ENCODE measurements at regions of chr5 and their contacts with region 1.

Region 1: DNA sequence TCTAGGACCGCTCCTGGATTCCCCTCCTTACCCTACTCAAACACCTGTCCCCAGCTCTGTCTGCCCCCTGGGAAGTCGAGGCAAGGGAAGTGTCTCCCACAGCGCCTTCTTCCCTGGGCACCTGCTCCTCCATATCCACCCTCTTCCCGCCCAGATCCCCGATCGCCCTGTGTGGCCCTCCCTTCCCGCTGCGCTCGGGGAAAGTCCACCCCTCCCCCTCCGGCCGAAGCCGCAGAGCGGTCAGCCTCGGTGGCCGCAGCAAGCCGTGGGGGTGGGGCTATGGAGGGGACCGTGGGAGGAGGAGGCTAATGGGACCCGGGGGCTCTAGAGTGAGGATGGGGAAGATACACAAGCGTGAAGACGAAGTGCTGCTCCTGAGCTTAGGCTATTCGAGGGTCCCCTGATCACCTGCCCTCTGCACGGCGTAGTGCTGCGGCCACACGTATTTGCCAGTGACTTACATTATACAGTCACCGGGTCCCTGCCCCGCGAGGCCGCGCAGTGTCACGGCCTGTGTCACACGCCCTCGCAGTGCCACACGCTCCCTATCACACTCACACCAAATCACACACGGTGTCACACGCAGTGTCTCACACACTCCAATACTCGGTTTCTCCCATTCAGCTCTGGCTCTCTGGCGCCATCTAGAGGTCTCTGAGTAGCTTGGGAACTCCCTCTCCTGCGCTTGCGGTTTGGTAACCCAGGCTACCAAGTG is 658 bp upstream of the PCDH1 start:
- DNase-seq: peak; percentile 90
- H3K4me3 ChIP-seq: peak overlapping the region; percentile 50 to 58 (median 53)
- H3K27ac ChIP-seq: no peak overlapping the region
- H3K4me1 ChIP-seq: peaks cover 26% of the 10 kb centered on the region
- H3K27me3 ChIP-seq: peaks cover 11% of the 10 kb centered on the region
- CTCF ChIP-seq: peak; percentile 98 to 99

Region 2: GRCh38 chr5:140273401-140273877 is 1605.4 kb before region 1 on chr5:
- CTCF ChIA-PET with region 1: no interaction called
- dilution Hi-C with region 1: no loop called
- in situ Hi-C with region 1: no loop called
- intact Hi-C with region 1: no loop called
- DNase-seq: no peak
- H3K4me3 ChIP-seq: no peak overlapping the region
- H3K27ac ChIP-seq: no peak overlapping the region
- H3K4me1 ChIP-seq: no peaks in the 10 kb centered on the region
- H3K27me3 ChIP-seq: no peaks in the 10 kb centered on the region
- CTCF ChIP-seq: no peak

Region 3: GRCh38 chr5:141701360-141702119 is 177.3 kb before region 1 on chr5:
- CTCF ChIA-PET with region 1: interaction called, 3 read pairs
- dilution Hi-C with region 1: no loop called
- in situ Hi-C with region 1: loop called in 1 of 2 experiments (anchors 5 kb)
- intact Hi-C with region 1: loop called (anchors 1 kb)
- DNase-seq: no peak
- H3K4me3 ChIP-seq: no peak overlapping the region
- H3K27ac ChIP-seq: no peak overlapping the region
- H3K4me1 ChIP-seq: peaks cover 9% of the 10 kb centered on the region
- H3K27me3 ChIP-seq: peaks cover 5% of the 10 kb centered on the region
- CTCF ChIP-seq: no peak

Region 4: DNA sequence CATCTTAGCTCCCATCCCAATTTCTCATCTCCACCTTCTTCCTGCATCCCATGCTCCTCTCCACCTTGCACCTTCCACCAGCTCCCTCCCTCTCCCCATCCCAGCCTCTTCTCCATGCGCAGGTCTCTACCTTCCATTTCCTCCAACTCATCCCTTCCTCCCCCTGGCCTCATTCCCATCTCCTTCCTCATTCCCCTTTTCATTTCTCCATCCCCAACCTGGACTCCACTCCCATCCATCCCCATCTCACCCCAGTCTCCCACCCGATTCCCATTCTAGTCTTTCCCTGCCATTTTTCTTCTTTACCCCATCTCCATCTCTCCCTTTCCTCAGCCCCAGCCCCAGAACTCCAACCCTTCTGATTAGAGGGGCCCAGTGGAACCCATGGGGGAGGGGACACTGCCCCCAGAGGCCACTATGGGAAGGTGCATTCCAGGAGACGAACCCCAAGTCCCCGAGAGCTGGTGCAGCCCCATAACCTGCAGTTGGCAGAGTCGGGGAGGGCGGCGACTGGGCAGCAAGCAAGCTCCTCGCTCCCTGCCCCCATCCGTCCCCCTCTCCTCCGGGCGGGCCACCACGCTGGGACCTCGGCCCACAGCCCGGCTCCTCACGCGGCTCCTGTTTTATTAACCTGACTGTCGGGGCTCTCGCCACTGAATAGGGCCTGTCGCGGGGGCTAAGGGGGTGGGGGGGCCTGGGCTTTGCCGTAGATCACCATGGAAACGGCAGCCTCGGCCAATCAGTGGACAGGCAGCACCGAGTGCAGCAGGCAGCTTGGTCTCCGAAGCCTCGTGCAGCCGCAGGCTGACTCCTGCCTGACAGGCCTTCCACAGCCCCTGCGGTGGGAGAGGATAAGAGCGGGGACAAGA is 67.3 kb before region 1 on chr5:
- CTCF ChIA-PET with region 1: no interaction called
- dilution Hi-C with region 1: no loop called
- in situ Hi-C with region 1: no loop called
- intact Hi-C with region 1: loop called (anchors 1 kb)
- DNase-seq: no peak
- H3K4me3 ChIP-seq: no peak overlapping the region
- H3K27ac ChIP-seq: no peak overlapping the region
- H3K4me1 ChIP-seq: no peaks in the 10 kb centered on the region
- H3K27me3 ChIP-seq: no peaks in the 10 kb centered on the region
- CTCF ChIP-seq: peak; percentile 55 to 67

Region 5: DNA sequence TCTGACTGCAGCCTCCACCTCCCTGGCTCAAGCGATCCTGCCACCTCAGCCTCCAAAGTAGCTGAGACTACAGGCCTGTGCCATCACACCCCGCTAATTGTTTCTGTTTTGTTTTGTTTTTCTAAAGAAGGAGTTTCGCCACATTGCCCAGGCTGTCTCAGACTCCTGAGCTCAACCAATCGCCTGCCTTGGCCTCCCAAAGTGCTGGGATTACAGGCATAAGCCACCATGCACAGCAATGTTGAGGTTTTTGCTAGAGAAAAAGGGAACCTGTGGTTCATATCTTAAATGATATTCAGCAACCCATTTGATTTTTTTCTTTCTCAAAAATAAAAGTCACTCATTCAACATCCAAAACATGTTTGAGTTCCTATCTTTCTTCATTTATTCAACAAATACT is 24.4 kb after region 1 on chr5:
- CTCF ChIA-PET with region 1: interaction called, 10 read pairs
- dilution Hi-C with region 1: no loop called
- in situ Hi-C with region 1: no loop called
- intact Hi-C with region 1: no loop called
- DNase-seq: no peak
- H3K4me3 ChIP-seq: no peak overlapping the region
- H3K27ac ChIP-seq: no peak overlapping the region
- H3K4me1 ChIP-seq: no peaks in the 10 kb centered on the region
- H3K27me3 ChIP-seq: no peaks in the 10 kb centered on the region
- CTCF ChIP-seq: no peak

Region 6: DNA sequence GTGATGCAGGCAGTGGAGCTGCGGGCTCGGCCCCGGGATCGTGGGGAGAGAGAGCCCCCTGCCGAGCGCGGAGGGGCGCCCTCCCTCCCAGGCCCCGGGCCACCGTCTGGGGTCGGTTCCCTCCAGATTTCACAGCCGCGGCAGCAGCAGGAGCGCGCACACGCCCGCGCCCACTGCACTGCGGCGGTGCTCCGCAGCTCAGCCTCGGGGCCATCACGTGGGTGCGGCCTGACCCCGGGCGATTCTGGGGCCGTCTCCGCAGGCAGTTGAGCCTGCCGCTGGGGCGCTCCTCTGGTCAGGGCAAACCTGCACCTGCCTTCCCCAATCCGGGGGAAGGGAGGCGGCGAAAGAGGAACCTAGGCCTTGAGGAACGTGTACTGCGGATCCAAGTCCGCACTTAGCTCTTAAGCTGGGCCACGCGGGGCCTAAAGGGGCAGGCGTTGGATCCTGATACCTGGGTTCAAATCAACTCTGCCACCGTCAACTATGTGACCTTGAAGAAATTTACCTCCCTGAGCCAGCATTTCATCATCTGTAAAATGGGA is 35.4 kb after region 1 on chr5:
- CTCF ChIA-PET with region 1: no interaction called
- dilution Hi-C with region 1: no loop called
- in situ Hi-C with region 1: no loop called
- intact Hi-C with region 1: no loop called
- DNase-seq: no peak
- H3K4me3 ChIP-seq: peak overlapping the region in 1 of 3 experiments; percentile 18
- H3K27ac ChIP-seq: no peak overlapping the region
- H3K4me1 ChIP-seq: peaks cover 9% of the 10 kb centered on the region
- H3K27me3 ChIP-seq: no peaks in the 10 kb centered on the region
- CTCF ChIP-seq: peak in 1 of 2 donors; percentile 19